Prostate gland (tissue), 2 donors: ENCODE measurements at regions of chr17 and their contacts with region 1.

Region 1: DNA sequence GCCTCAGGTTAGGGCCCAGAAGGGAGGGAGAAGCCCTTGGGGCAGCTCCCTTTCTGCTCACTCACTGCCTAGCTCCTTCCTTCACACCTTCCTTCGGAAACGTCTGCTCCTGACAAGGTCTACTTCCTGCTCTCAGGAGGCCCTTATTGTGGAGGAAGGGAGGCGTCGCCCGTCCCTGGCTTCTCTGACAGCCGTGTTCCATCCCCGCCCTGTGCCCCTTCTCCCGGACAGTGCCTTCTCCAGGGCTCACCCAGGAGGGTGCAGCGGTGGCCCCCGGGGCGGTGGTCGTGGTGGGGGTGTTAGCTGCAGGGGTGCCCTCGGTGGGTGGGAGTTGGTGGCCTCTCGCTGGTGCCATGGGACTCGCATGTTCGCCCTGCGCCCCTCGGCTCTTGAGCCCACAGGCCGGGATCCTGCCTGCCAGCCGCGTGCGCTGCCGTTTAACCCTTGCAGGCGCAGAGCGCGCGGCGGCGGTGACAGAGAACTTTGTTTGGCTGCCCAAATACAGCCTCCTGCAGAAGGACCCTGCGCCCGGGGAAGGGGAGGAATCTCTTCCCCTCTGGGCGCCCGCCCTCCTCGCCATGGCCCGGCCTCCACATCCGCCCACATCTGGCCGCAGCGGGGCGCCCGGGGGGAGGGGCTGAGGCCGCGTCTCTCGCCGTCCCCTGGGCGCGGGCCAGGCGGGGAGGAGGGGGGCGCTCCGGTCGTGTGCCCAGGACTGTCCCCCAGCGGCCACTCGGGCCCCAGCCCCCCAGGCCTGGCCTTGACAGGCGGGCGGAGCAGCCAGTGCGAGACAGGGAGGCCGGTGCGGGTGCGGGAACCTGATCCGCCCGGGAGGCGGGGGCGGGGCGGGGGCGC is 231.9 kb downstream of the SEC14L1 start:
- DNase-seq: peak; percentile 47
- H3K4me3 ChIP-seq: peak overlapping the region; percentile 55 to 62
- H3K27ac ChIP-seq: peak overlapping the region; percentile 89 to 90
- H3K4me1 ChIP-seq: peaks cover 40% of the 10 kb centered on the region
- H3K27me3 ChIP-seq: no peaks in the 10 kb centered on the region
- CTCF ChIP-seq: no peak
- POLR2A ChIP-seq: no peak

Region 2: DNA sequence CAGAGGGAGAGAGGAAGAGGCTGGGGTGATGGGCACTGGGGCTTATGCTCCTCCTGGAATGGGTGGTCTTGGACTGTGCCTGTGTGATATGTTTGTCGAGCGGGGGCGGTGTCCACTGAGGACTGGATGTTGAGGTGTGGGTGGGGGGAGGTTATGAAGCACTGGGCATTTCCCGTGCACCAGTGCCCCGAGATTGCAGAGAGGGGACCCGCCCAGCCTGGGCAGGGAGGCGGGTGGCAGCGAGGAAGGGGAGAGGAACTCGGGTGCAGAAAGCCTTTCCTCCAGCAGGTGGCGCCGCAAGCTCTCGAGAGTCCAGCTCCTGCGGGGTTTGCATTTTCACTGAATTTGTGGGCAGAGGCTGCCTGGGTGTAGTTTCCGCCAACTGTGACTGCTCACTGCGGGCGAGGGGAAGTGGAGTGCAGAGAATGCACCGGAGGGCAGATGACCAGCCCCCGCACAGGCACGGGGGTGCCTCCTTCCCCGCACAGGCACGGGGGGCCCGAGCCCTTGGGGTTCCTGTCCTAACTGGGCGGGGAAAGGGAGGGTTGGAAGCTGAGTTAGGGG is 41.3 kb before region 1 on chr17:
- intact Hi-C with region 1: loop called (anchors 5 kb)
- DNase-seq: peak; percentile 89
- H3K4me3 ChIP-seq: no peak overlapping the region
- H3K27ac ChIP-seq: peak overlapping the region; percentile 11 to 32
- H3K4me1 ChIP-seq: no peaks in the 10 kb centered on the region
- H3K27me3 ChIP-seq: no peaks in the 10 kb centered on the region
- CTCF ChIP-seq: peak; percentile 92 to 98 (median 96)
- POLR2A ChIP-seq: no peak

Region 3: DNA sequence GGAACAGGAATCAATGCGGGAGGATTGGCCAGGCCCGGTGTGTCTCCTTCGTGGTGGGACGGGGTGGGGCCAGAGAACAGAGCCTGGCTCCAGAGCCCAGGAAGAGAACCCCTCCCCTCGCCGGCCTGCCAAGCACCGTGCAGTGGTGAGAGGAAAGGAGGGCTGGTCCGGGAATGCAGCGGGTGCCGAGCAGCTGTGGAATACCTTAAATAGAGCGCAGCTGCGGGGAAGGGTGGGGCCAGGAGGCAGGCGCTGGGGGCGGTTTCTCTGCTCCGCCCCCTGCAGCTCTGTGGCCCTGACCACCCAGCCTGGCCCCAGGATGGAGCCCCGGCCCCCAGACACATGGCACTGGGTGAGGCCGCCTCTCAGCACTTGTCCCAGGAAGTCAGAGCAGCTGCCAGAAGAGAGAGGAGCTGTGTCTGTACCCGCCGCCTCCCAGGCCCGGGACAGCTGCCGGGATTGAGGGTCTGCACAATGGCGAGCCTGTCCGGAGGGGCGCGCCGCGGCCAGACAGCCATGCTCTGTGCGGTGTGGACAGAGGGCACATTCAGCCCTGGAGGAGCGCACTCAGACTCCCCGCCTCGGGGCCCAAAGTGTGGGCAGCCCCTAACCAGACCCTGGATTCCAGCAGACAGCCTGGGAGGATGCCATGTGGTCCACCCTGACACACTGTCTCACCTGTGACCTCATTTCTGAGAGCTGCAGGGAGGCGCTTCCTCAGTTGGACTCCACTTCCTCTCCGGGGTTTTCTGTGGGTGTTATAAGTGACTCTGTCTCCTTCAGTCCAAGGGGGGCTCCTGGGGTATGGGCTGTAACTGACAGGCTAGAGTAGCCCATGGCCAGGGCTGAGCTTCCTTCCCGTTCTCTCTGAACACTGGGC is 36.9 kb after region 1 on chr17:
- intact Hi-C with region 1: loop called (anchors 2 kb)
- DNase-seq: peak; percentile 70
- H3K4me3 ChIP-seq: no peak overlapping the region
- H3K27ac ChIP-seq: peak overlapping the region; percentile 72 to 78
- H3K4me1 ChIP-seq: peaks cover 13% of the 10 kb centered on the region
- H3K27me3 ChIP-seq: no peaks in the 10 kb centered on the region
- CTCF ChIP-seq: no peak
- POLR2A ChIP-seq: peak; percentile 7

Region 4: DNA sequence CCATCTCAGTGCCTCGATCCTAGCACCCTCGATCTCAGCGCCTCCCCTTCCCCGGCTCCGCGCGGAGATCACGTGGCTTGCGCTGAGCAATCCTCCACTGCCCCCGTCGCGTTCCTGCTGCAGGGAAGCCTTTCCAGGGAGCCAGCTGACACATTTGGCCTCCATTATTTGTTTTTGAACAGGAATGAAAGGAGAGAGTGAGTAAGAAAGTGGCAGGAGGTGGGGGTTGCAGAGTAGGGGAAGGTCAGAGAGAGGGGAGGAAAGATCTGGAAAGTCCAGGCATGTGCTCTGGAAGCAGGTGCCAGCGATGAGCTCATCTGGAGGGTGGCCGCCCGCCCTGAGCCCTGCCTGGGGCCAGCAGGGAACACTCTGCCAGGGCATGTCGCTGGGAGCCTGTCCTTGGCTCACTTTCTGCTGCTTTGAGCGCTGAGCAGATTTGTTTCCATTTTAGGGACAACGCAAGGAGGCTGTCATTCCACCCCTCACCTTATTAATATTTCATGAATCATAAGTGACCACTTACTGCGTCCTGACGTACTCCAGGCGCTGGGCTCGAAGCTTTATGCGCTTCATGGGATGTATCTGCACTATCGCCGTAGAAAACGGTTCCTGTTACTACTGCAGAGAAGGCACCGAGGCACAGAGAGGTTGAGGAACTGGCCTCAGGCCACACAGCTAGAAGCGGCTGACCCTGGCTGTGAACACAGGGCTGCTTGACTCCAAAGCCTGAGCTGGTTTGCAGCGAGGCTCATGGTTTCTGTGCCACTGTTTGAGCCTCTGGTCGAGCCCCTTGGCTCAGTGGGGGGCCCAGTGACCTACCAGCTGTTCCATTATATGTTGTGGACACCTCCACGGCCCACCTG is 51.1 kb after region 1 on chr17:
- intact Hi-C with region 1: loop called (anchors 2 kb)
- DNase-seq: peak; percentile 72
- H3K4me3 ChIP-seq: no peak overlapping the region
- H3K27ac ChIP-seq: peak overlapping the region; percentile 80 to 90
- H3K4me1 ChIP-seq: peaks cover 29% of the 10 kb centered on the region
- H3K27me3 ChIP-seq: no peaks in the 10 kb centered on the region
- CTCF ChIP-seq: no peak
- POLR2A ChIP-seq: no peak

Region 5: GRCh38 chr17:77724876-77725615 is 352.4 kb after region 1 on chr17:
- intact Hi-C with region 1: no loop called
- DNase-seq: no peak
- H3K4me3 ChIP-seq: no peak overlapping the region
- H3K27ac ChIP-seq: no peak overlapping the region
- H3K4me1 ChIP-seq: no peaks in the 10 kb centered on the region
- H3K27me3 ChIP-seq: no peaks in the 10 kb centered on the region
- CTCF ChIP-seq: no peak
- POLR2A ChIP-seq: no peak